ENCODE measurements at regions of chr14 and their contacts with region 1.

Region 1: DNA sequence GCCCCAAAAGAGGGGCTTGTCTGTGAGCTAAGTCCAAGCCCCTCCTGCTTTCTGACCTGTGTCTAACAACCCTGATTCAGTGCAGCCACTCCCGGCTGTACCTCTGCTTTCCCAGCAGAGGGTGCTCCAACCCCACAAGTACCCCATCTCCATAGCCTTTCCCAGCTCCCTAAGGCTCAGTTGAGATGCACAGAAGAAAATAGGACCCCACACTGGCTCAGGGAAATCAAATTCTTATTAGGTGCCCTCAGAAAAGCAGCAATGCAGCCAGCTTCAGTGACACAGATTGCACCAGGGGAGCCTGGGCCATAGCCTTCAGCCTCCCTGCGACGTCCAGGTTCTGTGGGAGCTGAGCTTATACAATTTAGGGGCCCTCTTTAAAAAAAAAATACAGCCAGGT is 49.9 kb downstream of the LRRC74A start:
- DNase-seq: peak; percentile 78 to 87
- H3K4me3 ChIP-seq: no peak overlapping the region
- H3K27ac ChIP-seq: no peak overlapping the region
- H3K4me1 ChIP-seq: no peaks in the 10 kb centered on the region
- H3K27me3 ChIP-seq: peaks cover 7% of the 10 kb centered on the region
- CTCF ChIP-seq: peak; percentile 100

Region 2: GRCh38 chr14:76904740-76905438 is 28.8 kb after region 1 on chr14:
- CTCF ChIA-PET with region 1: interaction called, 8 read pairs
- POLR2A ChIA-PET with region 1: no interaction called
- intact Hi-C with region 1: loop called (anchors 2 kb)
- DNase-seq: peak; percentile 98 to 100
- H3K4me3 ChIP-seq: peak overlapping the region; percentile 9; the same call in 1 of the 2 replicates
- H3K27ac ChIP-seq: peak overlapping the region; percentile 80
- H3K4me1 ChIP-seq: peaks cover 34% of the 10 kb centered on the region
- H3K27me3 ChIP-seq: no peaks in the 10 kb centered on the region
- CTCF ChIP-seq: no peak

Region 3: GRCh38 chr14:77067632-77068514 is 191.8 kb after region 1 on chr14:
- CTCF ChIA-PET with region 1: interaction called, 151 read pairs
- POLR2A ChIA-PET with region 1: interaction called, 11 read pairs
- intact Hi-C with region 1: loop called (anchors 1 kb)
- DNase-seq: peak; percentile 74 to 93
- H3K4me3 ChIP-seq: no peak overlapping the region
- H3K27ac ChIP-seq: no peak overlapping the region
- H3K4me1 ChIP-seq: peaks cover 54% of the 10 kb centered on the region
- H3K27me3 ChIP-seq: no peaks in the 10 kb centered on the region
- CTCF ChIP-seq: peak; percentile 100

Region 4: DNA sequence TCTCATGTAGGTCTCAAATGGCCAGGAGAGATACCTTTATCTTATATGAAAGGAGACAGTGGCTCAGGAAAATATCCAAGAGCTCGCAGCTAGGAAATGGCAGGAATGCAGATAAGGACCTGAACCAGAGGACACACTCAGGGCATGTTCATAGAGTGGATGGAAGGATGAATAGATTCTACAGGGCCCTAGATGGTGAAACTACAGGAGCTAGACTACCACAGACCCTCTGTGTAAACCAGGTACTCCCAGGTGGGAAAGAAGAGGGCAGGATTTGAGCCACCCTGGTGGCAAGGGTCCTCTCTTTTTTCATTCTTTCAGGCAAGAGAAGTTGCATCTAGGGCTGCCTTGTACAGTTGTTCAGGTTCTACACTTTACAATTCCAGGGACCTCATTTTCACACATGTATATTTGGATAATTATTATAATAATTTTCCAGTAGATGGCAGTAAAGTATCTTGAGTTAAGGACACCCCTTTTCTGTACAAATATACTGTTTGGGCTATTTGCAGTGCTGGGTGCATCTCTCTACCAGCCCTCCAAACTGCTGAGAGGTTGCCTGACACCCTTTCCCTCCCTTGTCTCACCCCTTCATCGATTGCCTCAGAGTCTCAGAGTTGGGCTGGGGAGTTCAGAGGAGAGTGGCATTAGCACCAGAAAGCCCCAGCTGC is 276.0 kb after region 1 on chr14:
- CTCF ChIA-PET with region 1: interaction called, 25 read pairs
- POLR2A ChIA-PET with region 1: no interaction called
- intact Hi-C with region 1: loop called (anchors 1 kb)
- DNase-seq: peak; percentile 31 to 66
- H3K4me3 ChIP-seq: no peak overlapping the region
- H3K27ac ChIP-seq: no peak overlapping the region
- H3K4me1 ChIP-seq: no peaks in the 10 kb centered on the region
- H3K27me3 ChIP-seq: peaks cover 52% of the 10 kb centered on the region
- CTCF ChIP-seq: peak; percentile 70

Region 5: GRCh38 chr14:77301103-77301502 is 425.0 kb after region 1 on chr14:
- CTCF ChIA-PET with region 1: no interaction called
- POLR2A ChIA-PET with region 1: no interaction called
- intact Hi-C with region 1: loop called (anchors 5 kb)
- DNase-seq: peak in 1 of 2 experiments; percentile 49
- H3K4me3 ChIP-seq: no peak overlapping the region
- H3K27ac ChIP-seq: no peak overlapping the region
- H3K4me1 ChIP-seq: peaks cover 32% of the 10 kb centered on the region
- H3K27me3 ChIP-seq: no peaks in the 10 kb centered on the region
- CTCF ChIP-seq: peak; percentile 86

Region 6: GRCh38 chr14:77554207-77554606 is 678.1 kb after region 1 on chr14:
- CTCF ChIA-PET with region 1: no interaction called
- POLR2A ChIA-PET with region 1: no interaction called
- intact Hi-C with region 1: loop called (anchors 1 kb)
- DNase-seq: no peak
- H3K4me3 ChIP-seq: no peak overlapping the region
- H3K27ac ChIP-seq: no peak overlapping the region
- H3K4me1 ChIP-seq: no peaks in the 10 kb centered on the region
- H3K27me3 ChIP-seq: no peaks in the 10 kb centered on the region
- CTCF ChIP-seq: no peak

Measured in PC-9 (cell line).